ENCODE measurements at regions of chr1 and their contacts with region 1.

Region 1: GRCh38 chr1:240784776-240785175 is 172.8 kb upstream of the GREM2 start:
- DNase-seq: no peak
- H3K4me3 ChIP-seq: no peak overlapping the region
- H3K27ac ChIP-seq: no peak overlapping the region
- H3K4me1 ChIP-seq: no peaks in the 10 kb centered on the region
- H3K27me3 ChIP-seq: no peaks in the 10 kb centered on the region
- CTCF ChIP-seq: no peak

Region 2: DNA sequence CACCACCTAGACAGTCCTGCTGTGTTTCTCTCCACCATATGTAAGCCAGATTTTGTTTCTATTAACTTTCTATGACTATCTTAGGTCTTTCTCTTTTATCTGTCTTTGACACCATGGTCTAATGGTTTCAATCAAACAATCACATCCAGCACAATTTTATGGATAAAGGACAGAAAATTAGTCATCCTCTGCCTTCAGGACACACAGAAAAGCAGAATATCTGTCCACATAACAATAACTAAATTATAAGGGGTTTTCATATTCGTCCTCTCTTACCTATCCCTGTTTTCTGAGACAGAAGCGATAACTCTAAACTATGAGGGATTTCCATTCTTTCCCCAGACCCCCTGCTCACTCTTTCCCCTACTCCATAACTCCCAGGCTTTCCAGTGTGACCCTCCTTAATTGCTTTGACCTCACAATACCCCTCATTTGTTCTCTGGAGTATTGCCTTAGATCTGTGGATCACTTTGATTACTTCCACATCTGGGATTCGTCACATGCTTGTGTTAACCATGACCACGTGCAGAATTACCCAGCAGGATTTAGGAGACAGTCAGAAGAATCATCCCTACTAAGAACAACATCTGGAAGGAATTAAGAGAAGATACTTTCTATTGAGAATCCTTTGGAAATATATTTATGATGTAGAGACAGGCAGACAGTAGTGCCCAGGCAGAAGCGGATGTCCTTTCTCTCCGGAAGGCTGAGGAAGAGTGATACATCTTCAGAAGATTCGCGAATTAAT is 64.6 kb before region 1 on chr1:
- CTCF ChIA-PET with region 1: no interaction called
- dilution Hi-C with region 1: loop called (anchors 5 kb)
- in situ Hi-C with region 1: no loop called
- intact Hi-C with region 1: no loop called
- DNase-seq: no peak
- H3K4me3 ChIP-seq: no peak overlapping the region
- H3K27ac ChIP-seq: no peak overlapping the region
- H3K4me1 ChIP-seq: no peaks in the 10 kb centered on the region
- H3K27me3 ChIP-seq: no peaks in the 10 kb centered on the region
- CTCF ChIP-seq: no peak

Measured in mammary epithelial cell (primary cell).